A549 (cell line): ENCODE measurements at regions of chr3 and their contacts with region 1.

Region 1: GRCh38 chr3:4493014-4493940 is at the start of gene ITPR1:
- DNase-seq: peak; percentile 94 to 98
- ATAC-seq: peak; percentile 94 to 96
- H3K4me3 ChIP-seq: peak within 1 kb of the TSS; percentile 71
- H3K27ac ChIP-seq: peak within 1 kb of the TSS; percentile 73 to 90
- H3K4me1 ChIP-seq: peaks cover 9% of the 10 kb centered on the region; the same call in 1 of the 3 replicates
- CTCF ChIP-seq: no peak
- EP300 ChIP-seq: no peak
- POLR2A ChIP-seq: peak; percentile 98
- RAD21 ChIP-seq: peak in 1 of 2 experiments; percentile 5; a peak in 1 of 5 replicates
- polyA plus RNA-seq, gene ITPR1: 9.6 and 10.7 TPM in 2 replicates

Region 2: DNA sequence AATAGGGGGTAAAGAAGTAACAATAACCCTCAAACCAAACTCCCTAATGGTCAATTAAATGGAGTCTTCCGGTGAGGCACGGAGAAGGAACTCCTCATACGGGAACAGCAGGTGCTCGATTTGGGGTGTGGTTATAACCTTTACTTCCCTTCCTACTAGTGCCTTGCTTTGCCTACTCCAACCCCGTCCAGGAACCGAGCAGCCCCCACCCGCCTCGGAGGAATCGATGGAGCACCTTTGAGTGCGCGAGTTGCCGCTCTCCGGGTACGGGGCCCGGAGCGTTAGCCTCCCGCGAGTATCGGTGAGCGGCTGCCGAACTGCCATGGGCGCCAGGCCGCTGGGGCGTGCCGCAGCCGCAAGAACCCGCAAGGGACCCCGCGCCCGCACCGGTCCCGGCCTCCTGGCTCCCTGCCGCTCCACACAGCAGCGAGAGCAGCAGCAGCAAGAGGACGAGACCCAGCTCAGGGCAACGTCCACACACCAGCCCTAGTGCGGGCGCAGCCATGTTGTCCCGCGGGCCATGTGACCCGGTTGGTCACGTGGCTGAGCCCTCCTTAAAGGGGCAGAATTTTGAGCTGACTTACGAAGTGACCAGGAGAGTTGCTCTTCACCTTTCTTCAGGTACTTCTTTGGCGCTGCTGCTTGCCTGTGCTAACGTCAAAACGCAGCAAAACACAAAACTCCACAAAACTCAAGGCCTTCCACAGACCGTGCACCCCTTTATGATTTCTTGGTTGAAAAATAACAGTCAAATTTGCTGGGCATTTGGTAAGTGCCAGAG is 26.3 kb before region 1 on chr3 and contains the start of gene SUMF1:
- CTCF ChIA-PET with region 1: interaction called, 3 read pairs
- POLR2A ChIA-PET with region 1: interaction called, 52 read pairs
- DNase-seq: peak; percentile 85 to 90
- ATAC-seq: peak; percentile 96 to 99
- H3K4me3 ChIP-seq: peak within 1 kb of the TSS; percentile 74
- H3K27ac ChIP-seq: peak within 1 kb of the TSS; percentile 83 to 93
- H3K4me1 ChIP-seq: peaks cover 6% of the 10 kb centered on the region; the same call in 1 of the 3 replicates
- CTCF ChIP-seq: no peak
- EP300 ChIP-seq: no peak
- POLR2A ChIP-seq: peak; percentile 88
- RAD21 ChIP-seq: no peak
- polyA plus RNA-seq, gene SUMF1: 23.4 and 25.4 TPM in 2 replicates

Region 3: DNA sequence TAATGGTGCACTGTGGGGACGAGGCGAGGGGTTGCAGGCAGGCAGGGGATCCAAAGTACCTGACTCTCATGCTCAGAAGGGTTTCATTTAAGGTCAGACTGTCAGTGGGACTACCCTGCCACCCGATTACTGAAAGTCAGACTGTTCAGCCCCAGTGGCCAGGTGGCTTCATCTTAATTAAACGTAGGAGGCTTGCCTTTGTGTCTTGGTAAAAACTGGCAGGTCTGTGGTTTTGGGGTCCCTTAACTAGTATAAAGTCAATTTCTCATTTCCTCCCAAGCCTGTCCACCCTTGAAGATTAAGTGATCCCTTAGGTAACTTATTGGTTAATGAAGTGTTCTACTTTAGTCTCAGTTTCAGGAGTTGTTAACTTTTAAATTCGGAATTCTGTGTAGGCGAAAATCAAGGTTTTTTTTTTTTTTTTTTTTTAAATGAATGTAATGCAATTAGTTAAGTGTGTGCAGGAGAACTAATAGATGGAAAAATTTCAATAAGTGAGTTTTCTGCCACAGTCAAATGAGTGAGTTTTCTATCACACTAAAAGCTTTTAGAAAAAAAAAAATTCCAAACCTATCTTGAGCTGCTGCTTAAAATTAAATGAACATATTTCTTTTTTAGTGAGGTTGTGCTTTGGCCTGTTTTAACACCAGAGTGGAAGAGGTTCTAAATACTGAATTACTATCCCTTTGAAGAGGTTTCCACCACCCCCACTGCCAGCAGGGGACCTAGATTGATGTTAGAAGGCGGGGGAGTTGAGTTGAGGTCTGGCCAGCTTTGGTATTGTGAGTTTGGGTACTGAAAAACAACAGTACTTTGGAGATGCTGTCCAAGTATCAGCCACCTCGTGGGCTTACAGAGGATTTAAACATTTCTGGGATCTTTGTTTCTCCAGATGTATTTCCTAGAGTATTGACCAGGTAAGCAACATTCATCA is 15.0 kb after region 1 on chr3:
- CTCF ChIA-PET with region 1: interaction called, 3 read pairs
- POLR2A ChIA-PET with region 1: interaction called, 11 read pairs
- DNase-seq: no peak
- ATAC-seq: no peak
- H3K4me3 ChIP-seq: no peak overlapping the region
- H3K27ac ChIP-seq: no peak overlapping the region
- H3K4me1 ChIP-seq: no peaks in the 10 kb centered on the region
- CTCF ChIP-seq: no peak
- EP300 ChIP-seq: no peak
- POLR2A ChIP-seq: no peak
- RAD21 ChIP-seq: no peak

Region 4: GRCh38 chr3:4766716-4767499 is 273.6 kb after region 1 on chr3:
- CTCF ChIA-PET with region 1: no interaction called
- POLR2A ChIA-PET with region 1: no interaction called
- DNase-seq: no peak
- ATAC-seq: no peak
- H3K4me3 ChIP-seq: no peak overlapping the region
- H3K27ac ChIP-seq: no peak overlapping the region
- H3K4me1 ChIP-seq: 0 out of 3 replicates have a peak, but pooled peaks cover 2% of the 10 kb centered on the region
- CTCF ChIP-seq: no peak
- EP300 ChIP-seq: no peak
- POLR2A ChIP-seq: no peak
- RAD21 ChIP-seq: no peak